ENCODE measurements at regions of chr15 and their contacts with region 1.

Region 1: DNA sequence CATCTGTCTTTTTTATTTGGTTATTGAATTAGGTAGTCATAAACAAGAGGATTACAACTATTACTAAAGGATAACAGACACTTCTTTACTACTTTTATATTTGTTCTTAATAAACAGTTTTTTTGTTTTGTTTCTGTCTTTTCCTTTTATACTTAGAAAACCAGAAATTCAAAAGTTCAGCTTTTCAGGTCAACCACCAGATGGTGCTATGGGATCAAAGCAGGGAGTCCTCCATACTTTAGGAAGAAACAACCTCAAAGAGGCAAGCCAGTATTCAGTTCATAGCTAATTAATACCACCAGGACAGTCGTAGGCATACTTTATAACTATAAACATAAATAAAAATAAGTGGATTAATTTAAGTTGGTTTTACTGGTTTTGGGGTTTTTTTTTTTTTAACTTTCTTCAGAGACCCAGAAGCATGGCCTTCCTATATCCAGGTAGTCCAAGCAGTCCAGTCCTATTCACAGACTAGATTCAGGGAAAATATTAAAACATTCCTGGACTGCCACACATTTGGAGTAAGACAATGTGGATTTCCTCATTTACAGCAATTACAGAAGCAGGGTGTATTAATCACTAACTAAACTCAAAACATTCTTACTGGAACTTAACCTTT is 16.0 kb upstream of the EID1 start:
- DNase-seq: peak; percentile 56
- CTCF ChIP-seq: peak; percentile 75

Region 2: GRCh38 chr15:48733615-48734014 is 128.3 kb before region 1 on chr15:
- CTCF ChIA-PET with region 1: no interaction called
- POLR2A ChIA-PET with region 1: no interaction called
- DNase-seq: no peak
- CTCF ChIP-seq: no peak

Region 3: GRCh38 chr15:48877630-48878595 is 16.0 kb after region 1 on chr15 and contains the start of gene EID1:
- CTCF ChIA-PET with region 1: interaction called, 24 read pairs
- POLR2A ChIA-PET with region 1: interaction called, 3 read pairs
- DNase-seq: peak; percentile 90
- CTCF ChIP-seq: no peak

Region 4: DNA sequence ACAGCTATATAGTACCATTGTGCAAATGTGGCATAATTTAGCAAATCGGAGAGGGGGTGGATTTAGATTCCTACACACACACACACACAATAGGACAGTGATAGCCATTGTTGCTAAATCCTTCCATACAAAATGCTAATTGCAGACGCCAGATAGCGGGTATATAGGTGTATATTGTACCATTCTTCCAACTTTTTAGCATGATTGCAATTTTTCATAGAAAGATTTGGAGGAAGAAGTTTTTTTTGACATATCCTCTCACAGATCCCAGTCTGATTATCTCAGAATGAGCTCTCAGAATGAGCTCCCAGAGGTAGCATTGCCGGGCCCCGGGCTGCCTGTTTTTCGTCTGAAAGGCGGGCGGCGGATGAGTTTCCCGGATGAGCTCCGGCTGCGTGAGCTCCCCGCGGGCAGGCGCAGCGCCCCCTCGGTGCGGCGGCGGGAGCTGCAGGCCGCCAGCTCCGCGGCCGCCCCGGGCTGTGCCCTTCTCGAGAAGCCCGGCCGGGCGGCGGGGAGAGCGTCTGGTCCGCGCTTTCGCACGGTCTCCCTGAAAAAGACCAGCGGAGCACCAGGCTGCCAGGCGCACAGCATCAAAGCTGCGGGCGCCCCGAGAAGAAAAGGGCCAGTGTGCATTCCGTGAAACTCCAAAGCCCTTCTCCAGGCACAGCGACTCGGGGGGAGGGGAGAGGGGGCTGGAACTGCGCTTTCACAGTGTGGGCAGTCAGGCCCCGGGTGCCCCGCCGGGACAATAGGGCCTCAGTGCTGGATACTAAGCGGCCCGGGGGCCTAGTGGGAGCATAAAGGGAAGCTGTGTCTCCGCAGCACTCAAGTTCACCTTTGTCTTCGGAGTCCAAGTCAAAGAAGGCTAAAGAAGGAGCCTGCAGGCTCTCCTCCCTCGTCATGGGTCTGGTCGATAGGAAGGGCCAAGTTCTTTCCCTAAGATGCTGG is 113.8 kb after region 1 on chr15:
- CTCF ChIA-PET with region 1: interaction called, 58 read pairs
- POLR2A ChIA-PET with region 1: no interaction called
- DNase-seq: peak; percentile 88
- CTCF ChIP-seq: peak; percentile 86

Region 5: GRCh38 chr15:49421991-49422390 is 560.1 kb after region 1 on chr15:
- CTCF ChIA-PET with region 1: interaction called, 60 read pairs
- POLR2A ChIA-PET with region 1: no interaction called
- DNase-seq: peak; percentile 26
- CTCF ChIP-seq: peak; percentile 61

Region 6: GRCh38 chr15:50051803-50052419 is 1190.0 kb after region 1 on chr15:
- CTCF ChIA-PET with region 1: interaction called, 10 read pairs
- POLR2A ChIA-PET with region 1: no interaction called
- DNase-seq: peak; percentile 15
- CTCF ChIP-seq: peak; percentile 37

Measured in GM10248 (cell line).